GM12878 (cell line): ENCODE measurements at regions of chr19 and their contacts with region 1.

Region 1: GRCh38 chr19:54551950-54552912 is 21.4 kb upstream of the LILRA2 start:
- DNase-seq: peak; percentile 40
- ATAC-seq: peak; percentile 87
- H3K4me3 ChIP-seq: peak overlapping the region; percentile 48; the same call in 1 of the 2 replicates
- H3K27ac ChIP-seq: peak overlapping the region; percentile 33
- H3K4me1 ChIP-seq: peaks cover 27% of the 10 kb centered on the region
- H3K27me3 ChIP-seq: no peaks in the 10 kb centered on the region
- CTCF ChIP-seq: no peak
- EP300 ChIP-seq: no peak
- POLR2A ChIP-seq: no peak
- RAD21 ChIP-seq: no peak

Region 2: DNA sequence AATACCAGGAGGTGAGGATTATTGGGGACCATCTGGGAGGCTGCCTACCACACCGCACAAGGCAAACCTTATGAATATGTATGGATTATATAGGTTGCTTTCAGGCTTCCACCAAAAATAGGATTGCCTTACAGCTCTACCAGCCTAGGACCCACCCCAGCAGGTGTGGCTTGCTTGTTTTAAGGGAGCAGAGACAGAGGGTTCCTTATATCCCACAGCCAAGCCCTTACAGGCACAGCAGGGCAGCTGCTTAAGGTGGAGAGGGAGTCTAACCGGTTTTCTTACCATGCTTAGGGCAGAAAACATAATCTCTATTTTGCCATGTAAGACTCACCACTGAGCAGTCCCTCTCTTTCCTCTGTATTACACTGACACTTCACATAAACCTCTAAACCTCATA is 153.0 kb before region 1 on chr19:
- CTCF ChIA-PET with region 1: no interaction called
- POLR2A ChIA-PET with region 1: no interaction called
- RAD21 ChIA-PET with region 1: no interaction called
- SMC1A ChIA-PET with region 1: no interaction called
- in situ Hi-C with region 1: no loop called
- intact Hi-C with region 1: no loop called
- DNase-seq: no peak
- ATAC-seq: no peak
- H3K4me3 ChIP-seq: no peak overlapping the region
- H3K27ac ChIP-seq: no peak overlapping the region
- H3K4me1 ChIP-seq: no peaks in the 10 kb centered on the region
- H3K27me3 ChIP-seq: no peaks in the 10 kb centered on the region
- CTCF ChIP-seq: no peak
- EP300 ChIP-seq: no peak
- POLR2A ChIP-seq: no peak
- RAD21 ChIP-seq: no peak

Region 3: DNA sequence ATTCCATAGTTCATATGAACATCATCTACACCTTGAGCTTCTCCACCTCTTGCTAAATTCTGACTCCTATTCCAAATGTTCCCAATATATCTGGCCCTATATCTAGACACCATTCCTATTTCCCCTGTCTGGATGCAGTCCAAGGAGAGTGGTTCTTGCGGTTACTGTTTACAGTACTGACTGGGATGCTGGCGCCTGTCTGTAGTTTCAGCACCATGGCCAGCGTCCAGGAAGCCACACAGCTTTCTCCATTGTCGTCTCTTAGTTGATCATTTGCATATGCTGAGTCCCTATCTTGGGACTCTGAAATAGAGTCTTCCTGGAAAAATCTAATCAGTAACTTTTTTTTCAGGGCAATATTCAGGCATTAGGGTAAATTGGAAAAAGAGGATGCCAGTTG is 34.7 kb before region 1 on chr19:
- CTCF ChIA-PET with region 1: interaction called, 3 read pairs
- POLR2A ChIA-PET with region 1: interaction called, 4 read pairs
- RAD21 ChIA-PET with region 1: interaction called, 4 read pairs
- SMC1A ChIA-PET with region 1: interaction called, 6 read pairs
- in situ Hi-C with region 1: no loop called
- intact Hi-C with region 1: loop called (anchors 5 kb)
- DNase-seq: no peak
- ATAC-seq: peak; percentile 35; the same call in 2 of the 3 replicates
- H3K4me3 ChIP-seq: no peak overlapping the region
- H3K27ac ChIP-seq: no peak overlapping the region
- H3K4me1 ChIP-seq: peaks cover 38% of the 10 kb centered on the region
- H3K27me3 ChIP-seq: peaks cover 0 to 1% of the 10 kb centered on the region in 2 experiments; a peak in 1 of 4 replicates
- CTCF ChIP-seq: no peak
- EP300 ChIP-seq: no peak
- POLR2A ChIP-seq: no peak
- RAD21 ChIP-seq: no peak

Region 4: DNA sequence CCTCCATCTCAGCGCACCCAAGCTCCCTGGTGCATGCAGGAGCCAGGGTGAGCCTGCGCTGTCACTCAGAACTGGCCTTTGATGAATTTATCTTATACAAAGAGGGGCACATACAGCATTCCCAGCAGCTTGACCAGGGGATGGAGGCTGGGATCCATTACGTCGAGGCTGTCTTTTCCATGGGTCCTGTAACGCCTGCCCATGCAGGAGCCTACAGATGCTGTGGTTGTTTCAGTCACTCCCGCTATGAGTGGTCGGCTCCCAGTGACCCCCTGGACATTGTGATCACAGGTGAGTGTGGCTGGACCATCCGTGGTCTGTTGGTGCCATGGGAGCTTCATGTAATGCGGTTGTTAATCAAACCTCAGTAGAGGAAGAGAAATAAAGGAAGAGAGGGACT is 16.6 kb before region 1 on chr19:
- CTCF ChIA-PET with region 1: interaction called, 4 read pairs
- POLR2A ChIA-PET with region 1: interaction called, 3 read pairs
- RAD21 ChIA-PET with region 1: no interaction called
- SMC1A ChIA-PET with region 1: interaction called, 3 read pairs
- in situ Hi-C with region 1: no loop called
- intact Hi-C with region 1: loop called (anchors 2 kb)
- DNase-seq: no peak
- ATAC-seq: no peak
- H3K4me3 ChIP-seq: no peak overlapping the region
- H3K27ac ChIP-seq: no peak overlapping the region
- H3K4me1 ChIP-seq: peaks cover 9% of the 10 kb centered on the region
- H3K27me3 ChIP-seq: no peaks in the 10 kb centered on the region
- CTCF ChIP-seq: no peak
- EP300 ChIP-seq: no peak
- POLR2A ChIP-seq: no peak
- RAD21 ChIP-seq: no peak

Region 5: GRCh38 chr19:54622431-54622830 is 70.2 kb after region 1 on chr19:
- CTCF ChIA-PET with region 1: interaction called, 9 read pairs
- POLR2A ChIA-PET with region 1: interaction called, 9 read pairs
- RAD21 ChIA-PET with region 1: interaction called, 17 read pairs
- SMC1A ChIA-PET with region 1: interaction called, 19 read pairs
- in situ Hi-C with region 1: no loop called
- intact Hi-C with region 1: loop called (anchors 5 kb)
- DNase-seq: no peak
- ATAC-seq: peak; percentile 6; the same call in 2 of the 3 replicates
- H3K4me3 ChIP-seq: peak overlapping the region; percentile 82
- H3K27ac ChIP-seq: peak overlapping the region; percentile 67
- H3K4me1 ChIP-seq: peaks cover 3% of the 10 kb centered on the region; the same call in 1 of the 2 replicates
- H3K27me3 ChIP-seq: no peaks in the 10 kb centered on the region
- CTCF ChIP-seq: no peak
- EP300 ChIP-seq: no peak
- POLR2A ChIP-seq: no peak
- RAD21 ChIP-seq: no peak